Activated CD8-positive, alpha-beta memory T cell treated with anti-CD3 and anti-CD28 coated beads, Interleukin-2, amount 10 ng/mL, durations not matched to agents 7 days and 5 days (primary cell): ENCODE measurements at regions of chr10 and their contacts with region 1.

Region 1: GRCh38 chr10:124791378-124792348 is at the start of gene EEF1AKMT2:
- DNase-seq: peak; percentile 87
- ATAC-seq: peak; percentile 98
- H3K4me3 Mint-ChIP-seq: peak within 1 kb of the TSS; percentile 91
- H3K27ac Mint-ChIP-seq: peak within 1 kb of the TSS; percentile 96
- H3K4me1 Mint-ChIP-seq: peaks cover 19% of the 10 kb centered on the region
- H3K27me3 Mint-ChIP-seq: no peaks in the 10 kb centered on the region
- total RNA-seq, gene EEF1AKMT2: 22.3 to 26.3 TPM

Region 2: DNA sequence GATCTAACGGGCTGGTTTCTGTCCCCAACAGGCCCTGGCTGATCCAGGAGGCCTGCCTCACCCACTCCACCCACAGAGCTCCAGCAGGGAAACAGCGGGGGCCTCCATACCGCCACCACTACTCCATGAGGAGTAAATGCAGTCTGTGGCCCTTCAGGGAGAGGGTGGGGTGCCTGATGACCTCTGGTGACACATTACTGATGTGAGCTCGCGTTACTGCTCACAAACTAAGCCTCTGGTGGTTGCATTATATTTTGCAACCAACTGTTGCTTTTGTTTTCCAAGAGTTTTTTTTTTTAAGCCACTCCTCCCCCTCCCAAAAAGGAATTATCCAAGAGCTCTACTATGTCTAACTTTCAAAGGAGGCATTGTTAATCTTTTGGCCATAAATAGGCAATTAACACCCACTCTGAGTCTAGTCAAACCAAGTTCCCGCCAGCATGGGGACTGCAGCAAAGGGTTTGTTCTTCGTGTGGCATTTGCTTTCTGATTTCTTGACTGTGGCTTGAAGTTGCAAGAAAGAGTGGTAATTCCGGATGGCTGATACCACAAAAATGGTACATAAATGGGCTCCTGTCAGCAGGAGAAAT is 120.1 kb before region 1 on chr10:
- CTCF ChIA-PET with region 1: no interaction called
- DNase-seq: no peak
- ATAC-seq: peak; percentile 54
- H3K4me3 Mint-ChIP-seq: no peak overlapping the region
- H3K27ac Mint-ChIP-seq: peak overlapping the region; percentile 78
- H3K4me1 Mint-ChIP-seq: peaks cover 54% of the 10 kb centered on the region
- H3K27me3 Mint-ChIP-seq: no peaks in the 10 kb centered on the region

Region 3: GRCh38 chr10:124802313-124802675 is 10.6 kb after region 1 on chr10:
- CTCF ChIA-PET with region 1: interaction called, 10 read pairs
- DNase-seq: no peak
- ATAC-seq: no peak
- H3K4me3 Mint-ChIP-seq: peak overlapping the region; percentile 78
- H3K27ac Mint-ChIP-seq: peak overlapping the region; percentile 82
- H3K4me1 Mint-ChIP-seq: peaks cover 19% of the 10 kb centered on the region
- H3K27me3 Mint-ChIP-seq: peaks cover 7% of the 10 kb centered on the region

Region 4: GRCh38 chr10:124827474-124827873 is 35.8 kb after region 1 on chr10:
- CTCF ChIA-PET with region 1: no interaction called
- DNase-seq: no peak
- ATAC-seq: no peak
- H3K4me3 Mint-ChIP-seq: no peak overlapping the region
- H3K27ac Mint-ChIP-seq: no peak overlapping the region
- H3K4me1 Mint-ChIP-seq: no peaks in the 10 kb centered on the region
- H3K27me3 Mint-ChIP-seq: no peaks in the 10 kb centered on the region

Region 5: GRCh38 chr10:124864421-124865193 is 72.9 kb after region 1 on chr10:
- CTCF ChIA-PET with region 1: no interaction called
- DNase-seq: no peak
- ATAC-seq: no peak
- H3K4me3 Mint-ChIP-seq: no peak overlapping the region
- H3K27ac Mint-ChIP-seq: no peak overlapping the region
- H3K4me1 Mint-ChIP-seq: no peaks in the 10 kb centered on the region
- H3K27me3 Mint-ChIP-seq: peaks cover 7% of the 10 kb centered on the region